ENCODE measurements at regions of chrX and their contacts with region 1.

Region 1: DNA sequence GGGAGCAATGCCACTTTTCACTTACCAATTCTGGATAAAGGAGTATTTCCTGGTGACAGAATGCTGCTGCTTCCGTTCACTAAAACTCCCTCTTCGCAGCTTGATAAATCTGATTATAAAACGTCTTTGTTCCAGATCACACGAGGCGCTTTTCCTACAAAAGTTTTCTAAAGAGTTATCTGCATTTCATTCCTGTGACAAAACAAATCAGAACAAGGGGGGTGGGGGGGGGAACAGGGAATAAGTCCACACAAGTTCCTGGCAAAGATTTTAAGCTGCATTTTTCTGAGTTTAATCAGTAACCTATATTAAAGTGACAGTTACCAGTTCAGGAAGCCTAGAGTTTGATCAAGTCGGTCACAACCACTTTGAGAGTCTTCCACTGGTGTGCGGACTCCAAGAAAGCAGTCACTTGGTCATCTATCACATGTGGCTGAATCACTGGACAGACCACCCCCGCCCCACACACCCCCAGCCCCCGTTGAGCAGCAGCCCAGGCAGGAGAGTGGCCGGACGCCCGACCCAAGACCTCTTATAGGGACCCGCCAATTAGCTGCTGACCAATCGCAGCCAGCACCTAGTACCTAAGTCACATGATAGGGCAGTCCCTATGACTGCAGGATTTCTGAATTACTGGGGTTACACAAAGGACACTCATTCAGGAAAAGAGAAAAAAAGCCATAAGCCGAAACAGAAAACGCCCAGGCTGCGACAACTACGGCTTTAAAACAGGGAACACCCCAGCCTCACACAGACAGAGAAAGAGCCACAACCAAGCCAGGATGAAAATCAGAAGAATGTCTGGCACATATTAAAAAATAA is 569.3 kb upstream of the DIPK2B start:
- DNase-seq: no peak
- H3K4me3 ChIP-seq: peak overlapping the region; percentile 65
- CTCF ChIP-seq: no peak

Region 2: DNA sequence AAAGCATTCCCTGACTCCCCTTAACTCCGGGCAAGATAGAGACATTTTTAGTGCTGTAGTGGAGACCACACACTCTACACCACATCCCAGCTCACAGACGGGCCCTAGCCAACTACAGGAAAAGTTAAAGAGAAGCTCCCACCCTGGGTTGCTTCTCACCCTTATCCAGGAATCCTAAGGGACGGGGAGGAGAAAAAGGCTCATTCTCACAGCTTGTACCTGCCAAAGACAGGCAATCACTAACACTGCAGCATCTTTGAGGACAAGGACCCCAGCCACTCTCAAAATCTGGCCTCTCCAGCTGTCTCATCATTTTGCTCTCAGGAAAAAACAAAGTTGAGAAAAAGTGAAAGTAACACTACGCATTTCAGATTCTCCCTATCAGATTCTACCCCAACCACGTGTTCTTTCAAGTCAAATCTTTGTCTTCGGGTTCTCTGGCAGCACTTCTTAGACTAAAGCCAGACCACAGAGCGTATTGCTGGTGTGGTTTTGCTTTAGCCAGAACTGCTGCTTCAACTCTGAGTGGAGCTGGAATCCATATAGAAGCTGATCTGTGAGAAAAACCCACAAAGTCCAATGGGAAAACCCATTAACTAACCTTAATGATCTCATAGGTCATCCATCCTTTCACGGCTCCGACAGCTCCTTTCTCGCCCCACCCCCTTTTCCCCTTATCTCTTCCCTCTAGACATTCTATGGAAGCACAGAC is 36.6 kb after region 1 on chrX:
- CTCF ChIA-PET with region 1: no interaction called
- POLR2A ChIA-PET with region 1: interaction called, 17 read pairs
- DNase-seq: peak; percentile 71
- H3K4me3 ChIP-seq: peak overlapping the region; percentile 47
- CTCF ChIP-seq: no peak

Region 3: DNA sequence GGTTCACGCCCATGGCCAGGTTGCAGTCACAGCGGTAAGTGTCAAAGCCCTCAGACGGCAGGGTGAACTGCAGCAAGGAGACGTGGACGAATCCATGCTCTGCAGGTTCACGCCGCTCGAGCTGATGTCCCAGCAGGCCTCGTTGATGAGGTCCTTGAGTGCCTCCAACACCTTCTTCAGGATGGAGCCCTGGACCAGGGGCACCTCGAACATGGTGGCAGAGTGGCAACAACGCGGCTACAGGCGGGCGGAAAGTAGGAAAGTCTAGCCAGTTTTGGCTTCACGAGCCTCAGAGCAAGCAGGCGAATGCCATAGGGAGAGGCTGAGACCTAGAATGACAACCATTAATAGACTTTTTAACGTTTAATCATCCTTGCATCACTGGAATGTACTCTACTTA is 289.3 kb after region 1 on chrX:
- CTCF ChIA-PET with region 1: no interaction called
- POLR2A ChIA-PET with region 1: no interaction called
- DNase-seq: no peak
- H3K4me3 ChIP-seq: no peak overlapping the region
- CTCF ChIP-seq: no peak

Measured in AG04449 (cell line).